Transverse colon (tissue), 4 donors: ENCODE measurements at regions of chr9 and their contacts with region 1.

Region 1: GRCh38 chr9:110142868-110143462 is 65.0 kb downstream of the C9orf152 start:
- DNase-seq: no peak
- H3K4me3 ChIP-seq: no peak overlapping the region
- H3K27ac ChIP-seq: peak overlapping the region in 3 of 4 donors; percentile 13 to 58 (median 30)
- H3K4me1 ChIP-seq: peaks cover 10 to 33% (median 11%) of the 10 kb centered on the region in 4 donors
- H3K27me3 ChIP-seq: no peaks in the 10 kb centered on the region
- CTCF ChIP-seq: no peak
- EP300 ChIP-seq: no peak
- POLR2A ChIP-seq: no peak

Region 2: GRCh38 chr9:109918339-109919163 is 224.4 kb before region 1 on chr9:
- in situ Hi-C with region 1: no loop called
- intact Hi-C with region 1: no loop called
- DNase-seq: peak; percentile 49
- H3K4me3 ChIP-seq: peak overlapping the region in 1 of 4 donors; percentile 12
- H3K27ac ChIP-seq: peak overlapping the region; percentile 61 to 77 (median 72)
- H3K4me1 ChIP-seq: peaks cover 8 to 44% (median 25%) of the 10 kb centered on the region in 4 donors
- H3K27me3 ChIP-seq: no peaks in the 10 kb centered on the region
- CTCF ChIP-seq: no peak
- EP300 ChIP-seq: no peak
- POLR2A ChIP-seq: no peak

Region 3: GRCh38 chr9:110058304-110058953 is 84.5 kb before region 1 on chr9:
- in situ Hi-C with region 1: no loop called
- intact Hi-C with region 1: no loop called
- DNase-seq: peak; percentile 66
- H3K4me3 ChIP-seq: no peak overlapping the region
- H3K27ac ChIP-seq: no peak overlapping the region
- H3K4me1 ChIP-seq: peaks cover 0 to 3% (median 0%) of the 10 kb centered on the region in 4 donors
- H3K27me3 ChIP-seq: no peaks in the 10 kb centered on the region
- CTCF ChIP-seq: peak; percentile 38 to 84 (median 57)
- EP300 ChIP-seq: no peak
- POLR2A ChIP-seq: no peak

Region 4: GRCh38 chr9:110110154-110110553 is 32.8 kb before region 1 on chr9:
- in situ Hi-C with region 1: no loop called
- intact Hi-C with region 1: loop called (anchors 1 kb)
- DNase-seq: no peak
- H3K4me3 ChIP-seq: no peak overlapping the region
- H3K27ac ChIP-seq: no peak overlapping the region
- H3K4me1 ChIP-seq: peaks cover under 1 to 15% (median 2%) of the 10 kb centered on the region in 4 donors
- H3K27me3 ChIP-seq: no peaks in the 10 kb centered on the region
- CTCF ChIP-seq: no peak
- EP300 ChIP-seq: no peak
- POLR2A ChIP-seq: no peak

Region 5: GRCh38 chr9:110228960-110229359 is 86.0 kb after region 1 on chr9:
- in situ Hi-C with region 1: no loop called
- intact Hi-C with region 1: no loop called
- DNase-seq: no peak
- H3K4me3 ChIP-seq: no peak overlapping the region
- H3K27ac ChIP-seq: no peak overlapping the region
- H3K4me1 ChIP-seq: no peaks in the 10 kb centered on the region
- H3K27me3 ChIP-seq: no peaks in the 10 kb centered on the region
- CTCF ChIP-seq: no peak
- EP300 ChIP-seq: no peak
- POLR2A ChIP-seq: no peak